ENCODE measurements at regions of chr1 and their contacts with region 1.

Region 1: DNA sequence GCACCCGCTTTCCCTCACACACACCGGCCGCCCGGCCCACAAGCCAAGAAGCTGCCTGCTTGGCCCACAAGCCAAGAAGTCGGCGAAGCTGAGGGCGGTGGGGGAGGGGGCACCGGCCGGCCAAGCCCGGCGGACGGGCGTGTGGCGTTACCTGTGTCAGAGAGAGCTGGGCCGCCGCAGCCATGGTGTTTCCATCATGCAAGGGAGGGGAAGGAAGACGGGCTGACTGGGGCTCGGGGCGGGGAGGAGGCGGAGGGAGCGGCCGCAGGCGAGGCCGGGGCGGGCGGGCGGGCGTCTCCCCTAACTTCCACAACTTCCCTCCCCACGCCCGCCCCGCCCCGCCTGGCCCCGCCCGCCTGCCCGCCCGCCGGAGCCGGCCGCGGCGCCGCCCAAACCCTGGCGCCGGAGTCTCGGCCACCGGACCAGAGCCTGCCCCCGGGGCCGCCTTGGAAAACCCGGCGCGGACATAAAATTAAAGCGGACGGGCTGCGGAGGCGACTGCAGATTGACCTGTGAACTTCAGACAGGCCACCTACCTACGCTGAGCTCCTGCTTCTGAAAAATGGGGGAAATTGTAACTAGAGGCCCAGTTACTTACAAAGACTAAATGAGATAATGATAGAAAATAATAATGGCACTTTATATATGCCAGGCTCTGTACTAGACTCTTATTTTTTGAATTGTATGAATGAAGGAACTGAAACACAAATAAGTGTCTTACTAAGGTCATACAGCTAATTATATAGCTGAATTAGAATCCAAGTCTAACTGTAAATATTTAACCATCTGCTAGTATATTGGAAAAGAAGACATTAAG is at the start of gene EPS15:
- H3K4me3 ChIP-seq: peak within 1 kb of the TSS; percentile 95
- H3K27ac ChIP-seq: peak within 1 kb of the TSS; percentile 89
- H3K4me1 ChIP-seq: peaks cover 4% of the 10 kb centered on the region
- CTCF ChIP-seq: peak; percentile 10; the same call in 1 of the 2 replicates

Region 2: GRCh38 chr1:51453010-51453409 is 66.2 kb before region 1 on chr1:
- CTCF ChIA-PET with region 1: no interaction called
- POLR2A ChIA-PET with region 1: no interaction called
- H3K4me3 ChIP-seq: no peak overlapping the region
- H3K27ac ChIP-seq: no peak overlapping the region
- H3K4me1 ChIP-seq: no peaks in the 10 kb centered on the region
- CTCF ChIP-seq: no peak

Region 3: GRCh38 chr1:51535006-51535592 is 15.8 kb after region 1 on chr1:
- CTCF ChIA-PET with region 1: interaction called, 11 read pairs
- POLR2A ChIA-PET with region 1: interaction called, 4 read pairs
- H3K4me3 ChIP-seq: no peak overlapping the region
- H3K27ac ChIP-seq: no peak overlapping the region
- H3K4me1 ChIP-seq: no peaks in the 10 kb centered on the region
- CTCF ChIP-seq: peak; percentile 66; the same call in 1 of the 2 replicates

Region 4: DNA sequence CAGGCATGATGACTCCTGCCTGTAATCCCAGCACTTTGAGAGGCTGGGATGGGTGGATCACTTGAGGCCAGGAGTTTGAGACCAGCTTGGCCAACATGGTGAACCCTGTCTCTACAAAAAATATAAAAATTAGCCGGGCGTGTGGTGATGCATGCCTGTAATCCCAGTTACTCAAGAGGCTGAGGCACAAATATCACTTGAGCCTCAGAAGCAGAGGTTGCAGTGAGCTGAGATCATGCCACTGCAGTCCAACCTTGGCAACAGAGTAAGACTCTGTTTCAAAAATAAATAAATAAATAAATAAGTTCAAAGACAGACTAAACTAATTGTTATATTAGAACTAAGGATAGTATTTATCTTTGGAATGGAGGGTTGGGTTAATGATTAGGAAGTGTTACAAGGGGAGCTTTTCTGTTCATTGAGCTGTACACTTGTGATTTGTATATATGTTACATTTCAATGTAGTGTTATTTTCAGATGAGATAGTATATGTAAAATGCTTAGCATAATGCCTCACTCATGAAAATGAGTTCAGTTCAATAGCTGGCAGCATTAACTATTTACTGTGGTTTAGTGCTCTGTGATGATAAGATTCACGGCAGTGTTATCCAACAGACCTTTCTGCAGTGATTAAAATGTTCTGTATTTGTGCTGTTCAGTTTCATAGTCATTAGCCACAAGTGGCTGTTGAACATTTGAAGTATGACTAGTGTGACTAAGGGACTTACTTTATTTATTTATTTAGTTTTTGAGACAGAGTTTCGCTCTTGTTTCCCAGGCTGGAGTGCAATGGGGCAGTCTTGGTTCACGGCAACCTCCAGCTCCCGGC is 145.4 kb after region 1 on chr1:
- CTCF ChIA-PET with region 1: no interaction called
- POLR2A ChIA-PET with region 1: no interaction called
- H3K4me3 ChIP-seq: no peak overlapping the region
- H3K27ac ChIP-seq: no peak overlapping the region
- H3K4me1 ChIP-seq: peaks cover 10% of the 10 kb centered on the region
- CTCF ChIP-seq: no peak